ENCODE measurements at regions of chr20 and their contacts with region 1.

Region 1: DNA sequence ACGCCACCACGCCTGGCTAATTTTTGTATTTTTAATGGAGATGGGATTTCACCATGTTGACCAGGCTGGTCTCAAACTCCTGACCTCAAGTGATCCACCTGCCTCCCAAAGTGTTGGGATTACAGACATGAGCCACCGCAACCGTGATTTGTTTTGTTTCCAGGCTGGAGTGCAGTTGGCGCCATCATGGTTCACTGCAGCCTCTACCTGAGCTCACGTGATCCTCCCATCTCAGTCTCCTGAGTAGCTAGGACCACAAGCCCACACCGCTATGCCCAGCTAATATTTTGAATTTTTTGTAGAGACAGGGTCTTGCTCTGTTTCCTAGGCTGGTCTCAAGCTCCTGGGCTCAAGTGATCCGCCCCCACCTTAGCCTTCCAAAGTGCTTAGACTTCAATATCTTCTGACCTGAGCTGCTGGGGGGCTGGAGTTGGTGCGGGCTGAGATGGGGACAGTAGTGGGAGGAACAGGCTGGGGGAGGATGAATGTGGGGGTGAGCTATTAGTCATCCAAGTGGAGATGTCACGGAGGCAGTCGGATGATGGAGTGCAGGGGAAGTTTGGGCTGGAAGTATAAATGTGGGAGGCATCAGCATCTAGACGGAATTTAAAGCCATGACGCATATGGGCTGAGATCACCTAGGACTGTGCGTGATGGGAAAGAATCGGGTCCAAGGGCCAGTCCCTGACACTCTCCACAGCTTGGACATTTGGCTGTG is 23.1 kb upstream of the ZMYND8 start:
- DNase-seq: no peak
- ATAC-seq: no peak
- H3K4me3 ChIP-seq: no peak overlapping the region
- H3K4me3 Mint-ChIP-seq: no peak overlapping the region
- H3K27ac ChIP-seq: no peak overlapping the region
- H3K27ac Mint-ChIP-seq: no peak overlapping the region
- H3K4me1 ChIP-seq: peaks cover 7 to 10% of the 10 kb centered on the region in 2 donors
- H3K4me1 Mint-ChIP-seq: peaks cover 10% of the 10 kb centered on the region
- H3K27me3 ChIP-seq: no peaks in the 10 kb centered on the region
- H3K27me3 Mint-ChIP-seq: no peaks in the 10 kb centered on the region
- CTCF ChIP-seq: no peak

Region 2: DNA sequence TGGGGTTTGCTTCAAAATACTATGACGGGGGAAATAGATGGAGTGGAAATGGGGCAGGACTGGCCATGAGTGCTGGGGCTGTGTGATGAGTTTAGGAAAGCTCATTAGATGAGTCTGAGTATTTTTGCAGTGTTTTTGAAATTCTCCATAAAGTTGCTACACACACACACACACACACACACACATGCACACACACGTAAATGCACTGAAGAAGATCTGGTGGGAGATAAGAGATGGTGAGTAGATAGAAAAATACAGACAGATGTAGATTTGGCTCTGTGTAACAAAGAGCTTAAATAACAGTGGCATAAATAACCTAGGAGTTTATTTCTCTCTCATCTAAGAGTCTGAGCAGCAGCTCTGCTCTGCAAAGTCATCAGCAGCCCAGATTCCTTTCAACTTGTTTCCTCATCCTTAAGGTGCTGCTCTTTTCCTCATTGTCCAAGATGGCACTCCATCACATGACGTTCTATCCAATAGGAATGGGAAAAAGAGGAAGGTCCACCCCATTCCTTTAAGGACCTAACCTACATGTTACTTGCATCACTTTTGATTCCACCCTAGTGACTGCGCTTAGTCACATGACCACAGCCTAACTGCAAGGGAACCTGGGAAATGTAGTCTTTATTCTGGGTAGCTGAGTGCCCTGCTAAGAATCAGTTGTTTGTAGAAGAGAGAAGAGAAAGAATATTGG is 408.5 kb before region 1 on chr20:
- CTCF ChIA-PET with region 1: no interaction called
- POLR2A ChIA-PET with region 1: no interaction called
- intact Hi-C with region 1: no loop called
- DNase-seq: peak; percentile 26
- ATAC-seq: no peak
- H3K4me3 ChIP-seq: no peak overlapping the region
- H3K4me3 Mint-ChIP-seq: no peak overlapping the region
- H3K27ac ChIP-seq: no peak overlapping the region
- H3K27ac Mint-ChIP-seq: no peak overlapping the region
- H3K4me1 ChIP-seq: no peaks in the 10 kb centered on the region
- H3K4me1 Mint-ChIP-seq: no peaks in the 10 kb centered on the region
- H3K27me3 ChIP-seq: no peaks in the 10 kb centered on the region
- H3K27me3 Mint-ChIP-seq: peaks cover 18% of the 10 kb centered on the region
- CTCF ChIP-seq: no peak

Region 3: DNA sequence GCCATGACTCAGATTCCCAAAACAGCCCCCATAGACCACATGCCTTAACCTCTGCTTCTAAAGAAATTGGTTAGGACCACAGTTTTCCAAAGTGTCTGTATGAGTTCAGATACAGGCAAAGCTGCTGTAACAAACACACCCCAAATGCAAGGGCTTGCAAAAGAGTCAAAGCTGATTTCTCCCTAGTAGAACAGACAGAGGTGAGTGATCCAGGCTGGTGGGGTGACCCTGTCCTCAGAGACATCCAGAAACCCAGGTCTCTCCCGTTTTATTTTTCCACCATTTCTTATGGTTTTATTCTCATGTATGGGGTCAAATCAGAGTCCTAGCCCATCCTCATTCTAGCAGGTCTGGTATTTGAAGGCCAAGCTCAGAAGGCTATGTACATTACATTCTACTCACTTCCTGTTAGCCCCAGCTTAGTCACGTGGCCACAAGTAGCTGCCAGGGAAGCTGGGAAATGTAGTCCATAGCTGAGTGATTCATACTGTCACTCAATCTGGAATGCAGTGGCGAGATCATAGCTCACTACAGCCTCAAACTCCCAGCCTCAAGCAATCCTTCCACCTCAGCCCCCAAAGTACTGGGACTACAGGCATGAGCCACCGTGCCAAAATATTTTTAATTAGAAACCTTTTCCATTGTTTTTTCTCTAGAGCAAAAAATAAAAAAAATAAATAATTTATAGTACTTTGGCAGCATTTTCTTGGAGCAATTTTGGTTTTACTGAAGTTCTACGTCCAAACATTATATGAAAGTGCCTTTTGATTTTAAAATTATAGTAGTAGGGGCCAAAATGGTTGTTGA is 198.3 kb before region 1 on chr20:
- CTCF ChIA-PET with region 1: no interaction called
- POLR2A ChIA-PET with region 1: no interaction called
- intact Hi-C with region 1: no loop called
- DNase-seq: peak; percentile 43
- ATAC-seq: peak; percentile 49
- H3K4me3 ChIP-seq: no peak overlapping the region
- H3K4me3 Mint-ChIP-seq: no peak overlapping the region
- H3K27ac ChIP-seq: no peak overlapping the region
- H3K27ac Mint-ChIP-seq: no peak overlapping the region
- H3K4me1 ChIP-seq: no peaks in the 10 kb centered on the region
- H3K4me1 Mint-ChIP-seq: peaks cover 1% of the 10 kb centered on the region
- H3K27me3 ChIP-seq: no peaks in the 10 kb centered on the region
- H3K27me3 Mint-ChIP-seq: no peaks in the 10 kb centered on the region
- CTCF ChIP-seq: no peak

Region 4: DNA sequence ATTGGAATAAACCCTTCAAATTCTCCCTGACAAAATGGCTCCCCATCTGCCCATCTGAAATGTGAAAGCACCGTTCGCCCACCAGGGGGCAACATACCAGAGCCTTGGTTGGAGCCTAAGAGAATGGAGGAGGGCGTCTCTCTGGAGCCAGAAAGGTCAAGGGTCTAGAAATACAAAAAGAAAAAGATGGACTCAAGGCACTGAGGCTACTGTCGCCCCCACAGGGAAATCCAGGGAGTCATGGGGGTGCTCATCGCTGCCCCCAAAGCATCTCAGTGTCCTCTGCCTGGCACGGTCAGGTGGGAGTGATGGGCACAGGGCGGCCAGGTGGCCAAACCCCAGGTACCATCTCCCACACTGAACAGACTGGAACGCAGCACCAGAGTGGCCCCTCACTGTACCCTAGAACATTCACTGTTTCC is 159.4 kb before region 1 on chr20:
- CTCF ChIA-PET with region 1: interaction called, 56 read pairs
- POLR2A ChIA-PET with region 1: no interaction called
- intact Hi-C with region 1: no loop called
- DNase-seq: peak; percentile 60
- ATAC-seq: peak; percentile 39
- H3K4me3 ChIP-seq: no peak overlapping the region
- H3K4me3 Mint-ChIP-seq: no peak overlapping the region
- H3K27ac ChIP-seq: no peak overlapping the region
- H3K27ac Mint-ChIP-seq: peak overlapping the region; percentile 63
- H3K4me1 ChIP-seq: no peaks in the 10 kb centered on the region
- H3K4me1 Mint-ChIP-seq: peaks cover 5% of the 10 kb centered on the region
- H3K27me3 ChIP-seq: no peaks in the 10 kb centered on the region
- H3K27me3 Mint-ChIP-seq: no peaks in the 10 kb centered on the region
- CTCF ChIP-seq: peak; percentile 76

Region 5: GRCh38 chr20:47304287-47304686 is 75.3 kb before region 1 on chr20:
- CTCF ChIA-PET with region 1: interaction called, 33 read pairs
- POLR2A ChIA-PET with region 1: interaction called, 11 read pairs
- intact Hi-C with region 1: no loop called
- DNase-seq: no peak
- ATAC-seq: no peak
- H3K4me3 ChIP-seq: no peak overlapping the region
- H3K4me3 Mint-ChIP-seq: no peak overlapping the region
- H3K27ac ChIP-seq: no peak overlapping the region
- H3K27ac Mint-ChIP-seq: no peak overlapping the region
- H3K4me1 ChIP-seq: no peaks in the 10 kb centered on the region
- H3K4me1 Mint-ChIP-seq: peaks cover 1% of the 10 kb centered on the region
- H3K27me3 ChIP-seq: no peaks in the 10 kb centered on the region
- H3K27me3 Mint-ChIP-seq: no peaks in the 10 kb centered on the region
- CTCF ChIP-seq: no peak

Region 6: GRCh38 chr20:47365023-47365764 is 14.4 kb before region 1 on chr20:
- CTCF ChIA-PET with region 1: interaction called, 24 read pairs
- POLR2A ChIA-PET with region 1: interaction called, 3 read pairs
- intact Hi-C with region 1: no loop called
- DNase-seq: no peak
- ATAC-seq: no peak
- H3K4me3 ChIP-seq: no peak overlapping the region
- H3K4me3 Mint-ChIP-seq: no peak overlapping the region
- H3K27ac ChIP-seq: no peak overlapping the region
- H3K27ac Mint-ChIP-seq: no peak overlapping the region
- H3K4me1 ChIP-seq: peaks cover 13% of the 10 kb centered on the region in 2 donors
- H3K4me1 Mint-ChIP-seq: peaks cover 26% of the 10 kb centered on the region
- H3K27me3 ChIP-seq: no peaks in the 10 kb centered on the region
- H3K27me3 Mint-ChIP-seq: no peaks in the 10 kb centered on the region
- CTCF ChIP-seq: no peak

Region 7: DNA sequence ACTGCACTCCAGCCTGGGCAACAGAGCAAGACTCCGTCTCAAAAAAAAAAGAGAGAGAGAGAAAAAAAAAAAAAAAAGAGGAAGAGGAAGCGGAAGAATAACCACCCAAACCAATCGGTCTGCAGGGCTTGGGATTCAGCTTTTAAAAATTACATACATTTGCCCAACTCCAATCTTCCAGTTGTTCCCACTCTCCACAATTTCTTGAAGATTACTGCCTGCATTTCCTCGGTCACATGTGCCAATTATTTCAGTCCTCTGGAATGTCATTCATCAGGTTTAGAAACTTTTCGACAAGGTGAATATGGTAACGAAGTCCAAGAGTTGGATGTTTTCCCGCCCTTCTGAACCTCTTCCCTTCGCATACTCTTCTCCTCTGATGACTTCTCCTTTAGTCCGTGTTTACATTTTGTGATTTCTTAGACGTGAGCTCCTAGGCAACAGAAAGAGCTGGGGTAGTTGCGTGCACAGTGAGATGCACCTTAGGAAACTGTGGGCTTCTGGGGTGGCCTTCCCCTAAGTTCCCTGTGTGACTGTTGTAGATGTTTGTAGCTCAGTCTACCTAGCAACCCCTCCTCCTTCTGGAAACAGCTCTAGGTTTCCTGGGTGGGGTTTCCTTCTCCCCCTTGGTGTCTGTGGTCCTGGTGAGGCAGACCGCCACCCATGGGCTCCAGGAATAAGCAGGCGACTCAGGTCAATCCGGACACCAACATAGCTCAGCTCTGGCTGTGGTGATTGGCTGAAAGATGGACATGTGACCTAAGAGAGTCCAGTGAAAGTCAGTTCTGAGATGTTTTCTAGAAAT is 59.2 kb after region 1 on chr20:
- CTCF ChIA-PET with region 1: interaction called, 24 read pairs
- POLR2A ChIA-PET with region 1: interaction called, 5 read pairs
- intact Hi-C with region 1: no loop called
- DNase-seq: peak; percentile 87
- ATAC-seq: peak; percentile 70
- H3K4me3 ChIP-seq: peak overlapping the region in 1 of 5 experiments; percentile 11
- H3K4me3 Mint-ChIP-seq: peak overlapping the region; percentile 61
- H3K27ac ChIP-seq: peak overlapping the region; percentile 87 to 88
- H3K27ac Mint-ChIP-seq: peak overlapping the region; percentile 90
- H3K4me1 ChIP-seq: peaks cover 41 to 56% of the 10 kb centered on the region in 2 donors
- H3K4me1 Mint-ChIP-seq: peaks cover 48% of the 10 kb centered on the region
- H3K27me3 ChIP-seq: no peaks in the 10 kb centered on the region
- H3K27me3 Mint-ChIP-seq: no peaks in the 10 kb centered on the region
- CTCF ChIP-seq: no peak

Region 8: GRCh38 chr20:47501483-47502270 is 122.1 kb after region 1 on chr20 and contains the start of gene NCOA3:
- CTCF ChIA-PET with region 1: interaction called, 87 read pairs
- POLR2A ChIA-PET with region 1: interaction called, 6 read pairs
- intact Hi-C with region 1: loop called (anchors 2 kb)
- DNase-seq: peak; percentile 93
- ATAC-seq: peak; percentile 91
- H3K4me3 ChIP-seq: peak within 1 kb of the TSS; percentile 90 to 99 (median 97)
- H3K4me3 Mint-ChIP-seq: peak within 1 kb of the TSS; percentile 100
- H3K27ac ChIP-seq: peak within 1 kb of the TSS; percentile 90 to 95
- H3K27ac Mint-ChIP-seq: peak within 1 kb of the TSS; percentile 100
- H3K4me1 ChIP-seq: peaks cover 28 to 33% of the 10 kb centered on the region in 2 donors
- H3K4me1 Mint-ChIP-seq: peaks cover 48% of the 10 kb centered on the region
- H3K27me3 ChIP-seq: no peaks in the 10 kb centered on the region
- H3K27me3 Mint-ChIP-seq: no peaks in the 10 kb centered on the region
- CTCF ChIP-seq: peak; percentile 59
- total RNA-seq, gene NCOA3: 289 and 309 TPM in 2 replicates

Region 9: DNA sequence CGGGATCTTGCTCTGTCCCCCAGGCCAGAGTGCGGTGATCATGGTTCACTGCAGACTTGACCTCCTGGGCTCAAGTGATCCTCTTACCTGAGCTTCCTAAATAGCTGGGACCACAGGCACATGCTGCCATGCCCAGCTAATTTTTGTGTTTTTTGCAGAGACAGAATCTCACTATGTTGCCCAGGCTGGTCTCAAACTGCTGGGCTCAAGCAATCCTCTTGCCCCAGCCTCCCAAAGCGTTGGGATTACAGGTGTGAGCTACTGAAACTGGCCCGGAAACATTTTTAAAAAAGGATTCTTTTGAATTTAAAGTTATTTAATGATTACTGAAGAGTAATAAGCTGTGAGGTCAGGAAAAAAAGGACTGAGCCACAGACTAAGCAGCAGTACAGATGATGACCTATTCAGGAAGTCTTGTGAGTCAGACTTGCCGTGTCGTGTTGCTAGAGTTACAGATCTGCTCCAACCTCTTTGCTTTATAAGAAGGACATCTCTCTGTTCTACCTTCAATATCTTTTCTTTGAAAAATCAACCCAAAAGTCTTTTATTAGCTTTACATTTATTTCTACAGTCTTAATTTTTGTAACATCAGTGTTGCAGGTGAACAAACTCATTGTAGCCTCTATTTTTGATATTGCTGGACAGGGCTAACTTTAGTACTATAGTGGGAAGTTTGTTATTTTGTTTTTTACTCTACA is 230.8 kb after region 1 on chr20:
- CTCF ChIA-PET with region 1: interaction called, 14 read pairs
- POLR2A ChIA-PET with region 1: no interaction called
- intact Hi-C with region 1: no loop called
- DNase-seq: peak; percentile 52
- ATAC-seq: peak; percentile 89
- H3K4me3 ChIP-seq: no peak overlapping the region
- H3K4me3 Mint-ChIP-seq: peak overlapping the region; percentile 68
- H3K27ac ChIP-seq: peak overlapping the region; percentile 15 to 73
- H3K27ac Mint-ChIP-seq: peak overlapping the region; percentile 81
- H3K4me1 ChIP-seq: peaks cover 27 to 37% of the 10 kb centered on the region in 2 donors
- H3K4me1 Mint-ChIP-seq: peaks cover 76% of the 10 kb centered on the region
- H3K27me3 ChIP-seq: no peaks in the 10 kb centered on the region
- H3K27me3 Mint-ChIP-seq: no peaks in the 10 kb centered on the region
- CTCF ChIP-seq: no peak

Region 10: GRCh38 chr20:47740862-47741184 is 361.2 kb after region 1 on chr20:
- CTCF ChIA-PET with region 1: no interaction called
- POLR2A ChIA-PET with region 1: no interaction called
- intact Hi-C with region 1: no loop called
- DNase-seq: no peak
- ATAC-seq: no peak
- H3K4me3 ChIP-seq: no peak overlapping the region
- H3K4me3 Mint-ChIP-seq: no peak overlapping the region
- H3K27ac ChIP-seq: no peak overlapping the region
- H3K27ac Mint-ChIP-seq: no peak overlapping the region
- H3K4me1 ChIP-seq: peaks cover 0 to 9% of the 10 kb centered on the region in 2 donors
- H3K4me1 Mint-ChIP-seq: no peaks in the 10 kb centered on the region
- H3K27me3 ChIP-seq: peaks cover 0 to under 1% (median 0%) of the 10 kb centered on the region in 4 experiments
- H3K27me3 Mint-ChIP-seq: peaks cover 8% of the 10 kb centered on the region
- CTCF ChIP-seq: no peak

Measured in B cell (primary cell).